Activated B cell treated with CpG ODN at 0.5 μM for 24 hours (primary cell): ENCODE measurements at regions of chr19 and their contacts with region 1.

Region 1: DNA sequence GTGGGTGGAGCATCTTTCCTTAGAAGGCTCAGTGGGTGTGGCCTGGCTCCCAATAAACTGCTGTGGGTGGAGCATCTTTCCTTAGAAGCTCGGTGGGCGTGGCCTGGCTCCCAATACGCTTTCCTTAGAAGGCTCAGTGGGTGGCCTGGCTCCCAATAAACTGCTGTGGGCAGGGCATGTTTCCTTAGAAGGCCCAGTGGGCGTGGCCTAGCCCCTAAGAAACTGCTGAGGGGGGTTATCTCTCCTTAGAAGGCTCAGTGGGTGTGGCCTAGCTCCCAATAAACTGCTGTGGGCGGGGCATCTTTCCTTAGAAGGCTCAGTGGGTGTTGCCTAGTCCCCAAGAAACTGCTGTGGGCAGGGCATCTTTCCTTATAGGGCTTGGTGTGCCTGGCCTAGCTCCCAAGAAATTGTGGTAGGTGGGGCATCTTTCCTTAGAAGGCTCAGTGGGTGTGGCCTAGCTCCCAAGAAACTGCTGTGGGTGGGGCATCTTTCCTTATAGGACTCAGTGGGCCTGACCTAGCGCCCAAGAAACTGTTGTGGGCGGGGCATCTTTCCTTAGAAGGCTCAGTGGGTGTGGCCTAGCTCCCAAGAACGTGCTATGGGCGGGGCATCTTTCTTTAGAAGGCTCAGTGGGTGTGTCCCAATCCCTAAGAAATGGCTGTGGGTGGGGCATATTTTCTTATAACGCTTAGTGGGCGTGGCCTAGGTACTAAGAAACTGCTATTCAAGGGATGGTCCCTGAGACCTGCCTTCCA is 10.3 kb downstream of the HSH2D start:
- DNase-seq: no peak
- ATAC-seq: no peak
- H3K4me3 Mint-ChIP-seq: no peak overlapping the region
- H3K27ac Mint-ChIP-seq: peak overlapping the region; percentile 30
- H3K4me1 Mint-ChIP-seq: peaks cover 59% of the 10 kb centered on the region
- H3K27me3 Mint-ChIP-seq: no peaks in the 10 kb centered on the region
- CTCF ChIP-seq: no peak

Region 2: GRCh38 chr19:15732388-15732787 is 421.4 kb before region 1 on chr19:
- CTCF ChIA-PET with region 1: no interaction called
- POLR2A ChIA-PET with region 1: no interaction called
- intact Hi-C with region 1: no loop called
- DNase-seq: no peak
- ATAC-seq: no peak
- H3K4me3 Mint-ChIP-seq: no peak overlapping the region
- H3K27ac Mint-ChIP-seq: no peak overlapping the region
- H3K4me1 Mint-ChIP-seq: no peaks in the 10 kb centered on the region
- H3K27me3 Mint-ChIP-seq: peaks cover 24% of the 10 kb centered on the region
- CTCF ChIP-seq: no peak

Region 3: DNA sequence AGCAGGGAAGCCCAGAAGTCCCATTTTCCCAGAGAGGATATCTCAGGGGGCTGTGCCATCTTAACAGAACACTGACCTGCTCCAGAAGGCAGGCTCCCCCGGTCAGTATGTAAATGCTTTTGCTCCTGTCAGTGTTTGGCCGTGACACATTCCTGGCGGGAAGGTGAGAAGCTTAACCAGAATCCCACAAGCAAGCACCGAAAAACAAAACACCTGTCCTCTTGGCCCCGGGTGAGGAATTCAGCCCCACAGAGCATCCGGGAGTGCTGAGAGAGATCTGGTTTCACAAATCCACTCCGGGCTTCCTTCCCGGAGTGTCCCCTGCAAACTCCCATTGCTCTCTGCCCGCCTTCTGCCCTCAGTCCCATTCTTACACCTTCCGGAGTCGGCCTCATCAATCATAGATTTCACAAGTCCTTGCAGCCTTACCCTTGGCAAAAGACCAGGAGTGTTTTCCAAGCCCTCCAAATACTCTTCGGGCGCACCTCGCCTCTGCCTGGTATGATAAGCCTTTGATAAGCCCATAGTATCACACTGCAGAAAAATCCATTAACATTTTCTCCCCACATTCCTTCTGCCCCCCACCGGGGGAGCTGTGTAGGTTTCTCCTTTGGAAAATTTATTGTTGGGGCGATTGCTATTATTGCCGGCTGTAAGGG is 65.3 kb before region 1 on chr19:
- CTCF ChIA-PET with region 1: no interaction called
- POLR2A ChIA-PET with region 1: interaction called, 10 read pairs
- intact Hi-C with region 1: no loop called
- DNase-seq: no peak
- ATAC-seq: no peak
- H3K4me3 Mint-ChIP-seq: no peak overlapping the region
- H3K27ac Mint-ChIP-seq: no peak overlapping the region
- H3K4me1 Mint-ChIP-seq: peaks cover 22% of the 10 kb centered on the region
- H3K27me3 Mint-ChIP-seq: no peaks in the 10 kb centered on the region
- CTCF ChIP-seq: no peak

Region 4: GRCh38 chr19:16168465-16169081 is 14.8 kb after region 1 on chr19:
- CTCF ChIA-PET with region 1: no interaction called
- POLR2A ChIA-PET with region 1: interaction called, 21 read pairs
- intact Hi-C with region 1: no loop called
- DNase-seq: no peak
- ATAC-seq: peak; percentile 74
- H3K4me3 Mint-ChIP-seq: no peak overlapping the region
- H3K27ac Mint-ChIP-seq: peak overlapping the region; percentile 61
- H3K4me1 Mint-ChIP-seq: peaks cover 22% of the 10 kb centered on the region
- H3K27me3 Mint-ChIP-seq: no peaks in the 10 kb centered on the region
- CTCF ChIP-seq: no peak